ENCODE measurements at regions of chr6 and their contacts with region 1.

Region 1: DNA sequence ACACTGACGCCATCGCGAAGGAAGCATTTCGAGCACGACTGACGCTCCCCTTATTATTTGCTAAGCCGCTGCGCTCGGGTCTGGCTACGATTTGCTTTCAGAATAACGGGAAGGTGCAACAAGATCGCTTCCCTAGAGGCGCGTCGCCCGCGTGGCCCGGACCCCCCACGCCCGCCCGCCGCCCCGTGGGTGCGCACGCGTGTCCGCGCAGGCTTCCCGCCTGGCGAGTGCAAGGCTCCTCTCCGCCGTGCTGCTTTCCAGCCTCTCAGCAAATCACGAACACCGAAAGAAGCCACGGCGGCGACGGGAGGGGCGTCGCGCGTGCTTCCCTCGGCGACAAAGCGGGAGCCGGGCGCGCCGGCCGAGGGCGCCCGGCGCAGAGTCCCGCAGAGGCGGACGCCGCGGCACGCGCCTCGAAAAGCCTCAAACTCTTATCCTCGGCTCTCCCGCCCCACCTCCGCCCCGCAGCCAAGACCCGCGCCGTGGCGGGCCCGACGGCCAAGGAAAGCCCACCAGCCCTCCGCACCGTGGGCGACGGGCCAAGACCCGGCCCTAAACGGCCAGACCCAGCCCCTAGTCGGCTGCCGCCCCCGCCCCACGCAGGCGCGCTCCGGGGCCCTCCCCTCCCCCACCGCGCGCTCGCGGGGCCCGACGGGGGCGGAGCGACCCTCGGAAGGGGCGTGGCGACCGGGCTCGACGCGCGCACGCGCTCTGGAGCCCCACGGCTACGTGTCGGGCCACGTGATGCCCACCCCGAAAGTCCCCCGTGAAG is 987 bp upstream of the QKI start:
- DNase-seq: peak; percentile 93 to 96 (median 95)
- H3K4me3 ChIP-seq: peak overlapping the region; percentile 58 to 77
- H3K4me3 Mint-ChIP-seq: peak overlapping the region; percentile 83 to 94 (median 90)
- H3K27ac ChIP-seq: peak overlapping the region; percentile 81
- H3K27ac Mint-ChIP-seq: peak overlapping the region; percentile 87 to 97 (median 95)
- H3K4me1 ChIP-seq: peaks cover 27% of the 10 kb centered on the region
- H3K4me1 Mint-ChIP-seq: peaks cover 13 to 40% (median 26%) of the 10 kb centered on the region in 4 donors
- H3K27me3 ChIP-seq: no peaks in the 10 kb centered on the region
- H3K27me3 Mint-ChIP-seq: peaks cover 0 to 2% of the 10 kb centered on the region in 2 donors

Region 2: GRCh38 chr6:162727309-162728182 is 686.0 kb before region 1 on chr6 and contains the starts of genes PACRG and PRKN:
- CTCF ChIA-PET with region 1: no interaction called
- POLR2A ChIA-PET with region 1: no interaction called
- intact Hi-C with region 1: loop called (anchors 1 kb)
- DNase-seq: peak; percentile 96 to 98 (median 97)
- H3K4me3 ChIP-seq: peak within 1 kb of the TSS; percentile 31 to 73
- H3K4me3 Mint-ChIP-seq: peak within 1 kb of the TSS; percentile 90 to 99 (median 95)
- H3K27ac ChIP-seq: peak within 1 kb of the TSS; percentile 81
- H3K27ac Mint-ChIP-seq: peak within 1 kb of the TSS; percentile 93 to 99 (median 97)
- H3K4me1 ChIP-seq: peaks cover 12% of the 10 kb centered on the region
- H3K4me1 Mint-ChIP-seq: peaks cover 8 to 18% (median 13%) of the 10 kb centered on the region in 4 donors
- H3K27me3 ChIP-seq: no peaks in the 10 kb centered on the region
- H3K27me3 Mint-ChIP-seq: no peaks in the 10 kb centered on the region
- total RNA-seq, gene PACRG: 0.81 TPM in 1 of 2 experiments, not detected in the other
- total RNA-seq, gene PRKN: 3.2 to 5.3 TPM

Region 3: GRCh38 chr6:163170294-163170883 is 243.1 kb before region 1 on chr6:
- CTCF ChIA-PET with region 1: no interaction called
- POLR2A ChIA-PET with region 1: no interaction called
- intact Hi-C with region 1: loop called (anchors 5 kb)
- DNase-seq: peak in 3 of 5 donors; percentile 6 to 16 (median 13)
- H3K4me3 ChIP-seq: no peak overlapping the region
- H3K4me3 Mint-ChIP-seq: no peak overlapping the region
- H3K27ac ChIP-seq: no peak overlapping the region
- H3K27ac Mint-ChIP-seq: peak overlapping the region in 1 of 7 donors; percentile 4
- H3K4me1 ChIP-seq: no peaks in the 10 kb centered on the region
- H3K4me1 Mint-ChIP-seq: peaks cover 0 to 2% (median 0%) of the 10 kb centered on the region in 4 donors
- H3K27me3 ChIP-seq: no peaks in the 10 kb centered on the region
- H3K27me3 Mint-ChIP-seq: peaks cover 3 to 7% of the 10 kb centered on the region in 2 donors

Region 4: GRCh38 chr6:163427498-163428254 is 14.1 kb after region 1 on chr6:
- CTCF ChIA-PET with region 1: interaction called, 17 read pairs
- POLR2A ChIA-PET with region 1: interaction called, 10 read pairs
- intact Hi-C with region 1: no loop called
- DNase-seq: peak in 4 of 5 donors; percentile 12 to 31 (median 24)
- H3K4me3 ChIP-seq: no peak overlapping the region
- H3K4me3 Mint-ChIP-seq: no peak overlapping the region
- H3K27ac ChIP-seq: no peak overlapping the region
- H3K27ac Mint-ChIP-seq: no peak overlapping the region
- H3K4me1 ChIP-seq: peaks cover 32% of the 10 kb centered on the region
- H3K4me1 Mint-ChIP-seq: peaks cover 32 to 61% (median 48%) of the 10 kb centered on the region in 4 donors
- H3K27me3 ChIP-seq: no peaks in the 10 kb centered on the region
- H3K27me3 Mint-ChIP-seq: no peaks in the 10 kb centered on the region

Region 5: DNA sequence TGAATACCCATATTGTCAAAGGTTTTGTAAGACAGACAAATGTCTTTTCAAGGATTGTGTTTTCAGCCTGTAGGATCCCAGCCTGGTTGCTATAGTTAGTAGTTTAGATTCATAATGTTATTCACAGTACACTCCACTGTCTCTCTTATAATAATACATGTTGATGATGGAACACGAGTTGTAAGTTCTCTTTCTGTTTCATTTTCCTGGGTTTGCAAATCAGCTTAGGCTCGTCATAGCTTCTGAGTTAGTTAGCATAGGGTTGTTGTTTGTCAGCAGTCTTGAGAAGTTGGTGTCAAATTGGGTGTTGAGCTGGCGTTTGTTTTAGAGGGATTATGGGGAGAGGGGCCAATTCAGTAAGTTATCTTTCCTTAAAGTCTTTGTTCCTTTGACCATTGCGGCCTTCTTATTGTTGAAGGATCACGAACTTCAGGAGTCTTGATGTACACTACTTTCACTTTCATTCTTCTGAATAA is 46.8 kb after region 1 on chr6:
- CTCF ChIA-PET with region 1: interaction called, 6 read pairs
- POLR2A ChIA-PET with region 1: interaction called, 34 read pairs
- intact Hi-C with region 1: loop called (anchors 1 kb)
- DNase-seq: peak; percentile 54 to 72 (median 63)
- H3K4me3 ChIP-seq: peak overlapping the region; percentile 48 to 66
- H3K4me3 Mint-ChIP-seq: peak overlapping the region; percentile 87 to 99 (median 94)
- H3K27ac ChIP-seq: peak overlapping the region; percentile 79
- H3K27ac Mint-ChIP-seq: peak overlapping the region; percentile 85 to 100 (median 99)
- H3K4me1 ChIP-seq: peaks cover 60% of the 10 kb centered on the region
- H3K4me1 Mint-ChIP-seq: peaks cover 50 to 74% (median 63%) of the 10 kb centered on the region in 4 donors
- H3K27me3 ChIP-seq: no peaks in the 10 kb centered on the region
- H3K27me3 Mint-ChIP-seq: no peaks in the 10 kb centered on the region

Region 6: GRCh38 chr6:163554663-163555062 is 141.1 kb after region 1 on chr6:
- CTCF ChIA-PET with region 1: interaction called, 27 read pairs
- POLR2A ChIA-PET with region 1: interaction called, 3 read pairs
- intact Hi-C with region 1: loop called (anchors 1 kb)
- DNase-seq: peak; percentile 37 to 68 (median 44)
- H3K4me3 ChIP-seq: no peak overlapping the region
- H3K4me3 Mint-ChIP-seq: no peak overlapping the region
- H3K27ac ChIP-seq: no peak overlapping the region
- H3K27ac Mint-ChIP-seq: peak overlapping the region in 5 of 7 donors; percentile 4 to 62 (median 40)
- H3K4me1 ChIP-seq: no peaks in the 10 kb centered on the region
- H3K4me1 Mint-ChIP-seq: peaks cover 5 to 15% (median 11%) of the 10 kb centered on the region in 4 donors
- H3K27me3 ChIP-seq: no peaks in the 10 kb centered on the region
- H3K27me3 Mint-ChIP-seq: no peaks in the 10 kb centered on the region

Region 7: DNA sequence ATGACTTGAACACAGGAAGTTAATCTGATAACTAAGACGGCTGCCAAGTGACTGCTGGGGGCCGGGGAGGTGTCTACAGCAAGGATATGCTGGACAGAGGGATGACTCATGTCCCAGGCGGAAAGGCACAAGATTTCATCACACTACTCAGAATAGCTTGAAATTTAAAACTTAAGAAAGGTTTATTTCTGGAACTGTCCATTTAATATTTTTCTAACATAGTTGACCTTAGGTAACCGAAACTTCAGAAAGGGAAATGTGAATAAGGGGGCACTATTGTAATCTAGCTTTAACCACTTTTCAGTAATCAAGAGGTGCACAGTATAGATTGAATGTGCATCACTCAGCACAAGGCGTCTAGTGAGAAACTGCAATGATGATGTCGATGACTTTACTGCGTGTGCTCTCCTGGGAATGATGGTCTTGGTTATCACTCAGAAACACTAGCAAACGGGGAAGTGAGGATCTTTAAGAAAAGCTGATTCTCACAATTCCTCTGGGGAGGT is 172.5 kb after region 1 on chr6:
- CTCF ChIA-PET with region 1: no interaction called
- POLR2A ChIA-PET with region 1: no interaction called
- intact Hi-C with region 1: no loop called
- DNase-seq: no peak
- H3K4me3 ChIP-seq: no peak overlapping the region
- H3K4me3 Mint-ChIP-seq: no peak overlapping the region
- H3K27ac ChIP-seq: no peak overlapping the region
- H3K27ac Mint-ChIP-seq: no peak overlapping the region
- H3K4me1 ChIP-seq: no peaks in the 10 kb centered on the region
- H3K4me1 Mint-ChIP-seq: peaks cover 0 to 1% (median 0%) of the 10 kb centered on the region in 4 donors
- H3K27me3 ChIP-seq: no peaks in the 10 kb centered on the region
- H3K27me3 Mint-ChIP-seq: peaks cover 7 to 9% of the 10 kb centered on the region in 2 donors

Region 8: DNA sequence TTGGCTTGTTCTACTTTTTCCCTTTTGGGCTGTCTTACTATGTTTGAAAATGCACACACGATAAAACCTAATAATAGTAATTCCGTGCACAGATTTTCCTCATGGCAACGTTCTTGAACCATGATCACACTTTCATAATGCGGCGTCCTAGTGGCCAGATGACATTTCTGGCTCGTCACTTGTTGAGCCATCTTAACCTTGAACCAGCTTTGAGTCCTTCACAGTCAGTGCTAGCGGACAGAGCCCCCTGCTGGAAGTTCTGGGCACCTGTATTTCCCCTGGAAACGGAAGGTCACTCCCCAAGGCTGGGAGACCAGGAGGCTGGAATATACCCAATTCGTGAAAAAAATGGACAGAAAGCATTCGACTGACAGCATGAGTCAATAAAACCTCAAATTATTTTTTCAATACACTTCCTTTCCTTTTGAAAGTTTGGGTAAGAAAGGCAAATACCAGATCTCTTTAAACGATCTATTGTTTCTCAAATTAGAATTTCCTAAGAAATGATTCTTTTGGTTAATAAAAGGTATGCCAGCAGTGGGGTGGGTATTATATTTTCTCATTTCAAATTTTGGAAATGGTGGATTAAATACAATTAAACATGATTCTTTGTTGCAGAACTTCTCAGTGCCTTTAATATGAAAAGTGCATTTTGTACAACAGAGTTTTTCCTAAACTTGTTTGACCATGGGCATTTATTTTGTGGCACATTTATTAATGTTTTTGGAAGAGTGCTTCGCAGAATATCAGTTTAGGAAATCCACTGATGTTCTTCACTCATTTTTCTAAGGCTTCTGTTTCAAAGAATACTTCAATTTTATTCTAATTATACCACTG is 543.3 kb after region 1 on chr6:
- CTCF ChIA-PET with region 1: interaction called, 3 read pairs
- POLR2A ChIA-PET with region 1: no interaction called
- intact Hi-C with region 1: loop called (anchors 1 kb)
- DNase-seq: peak; percentile 43 to 51 (median 49)
- H3K4me3 ChIP-seq: no peak overlapping the region
- H3K4me3 Mint-ChIP-seq: no peak overlapping the region
- H3K27ac ChIP-seq: no peak overlapping the region
- H3K27ac Mint-ChIP-seq: peak overlapping the region in 1 of 7 donors; percentile 9
- H3K4me1 ChIP-seq: no peaks in the 10 kb centered on the region
- H3K4me1 Mint-ChIP-seq: peaks cover 0 to 3% (median 2%) of the 10 kb centered on the region in 4 donors
- H3K27me3 ChIP-seq: no peaks in the 10 kb centered on the region
- H3K27me3 Mint-ChIP-seq: peaks cover 14 to 16% of the 10 kb centered on the region in 2 donors

Measured in CD4-positive, alpha-beta memory T cell (primary cell).